Colonic mucosa (tissue), 4 donors: ENCODE measurements at regions of chr20 and their contacts with region 1.

Region 1: GRCh38 chr20:46406199-46406985 is at the start of gene ELMO2:
- DNase-seq: peak; percentile 98
- H3K4me3 ChIP-seq: peak within 1 kb of the TSS; percentile 88
- H3K27ac ChIP-seq: peak within 1 kb of the TSS; percentile 88
- H3K4me1 ChIP-seq: peaks cover 11% of the 10 kb centered on the region
- H3K27me3 ChIP-seq: no peaks in the 10 kb centered on the region
- CTCF ChIP-seq: no peak
- total RNA-seq, gene ELMO2: 20.0 to 24.7 TPM

Region 2: DNA sequence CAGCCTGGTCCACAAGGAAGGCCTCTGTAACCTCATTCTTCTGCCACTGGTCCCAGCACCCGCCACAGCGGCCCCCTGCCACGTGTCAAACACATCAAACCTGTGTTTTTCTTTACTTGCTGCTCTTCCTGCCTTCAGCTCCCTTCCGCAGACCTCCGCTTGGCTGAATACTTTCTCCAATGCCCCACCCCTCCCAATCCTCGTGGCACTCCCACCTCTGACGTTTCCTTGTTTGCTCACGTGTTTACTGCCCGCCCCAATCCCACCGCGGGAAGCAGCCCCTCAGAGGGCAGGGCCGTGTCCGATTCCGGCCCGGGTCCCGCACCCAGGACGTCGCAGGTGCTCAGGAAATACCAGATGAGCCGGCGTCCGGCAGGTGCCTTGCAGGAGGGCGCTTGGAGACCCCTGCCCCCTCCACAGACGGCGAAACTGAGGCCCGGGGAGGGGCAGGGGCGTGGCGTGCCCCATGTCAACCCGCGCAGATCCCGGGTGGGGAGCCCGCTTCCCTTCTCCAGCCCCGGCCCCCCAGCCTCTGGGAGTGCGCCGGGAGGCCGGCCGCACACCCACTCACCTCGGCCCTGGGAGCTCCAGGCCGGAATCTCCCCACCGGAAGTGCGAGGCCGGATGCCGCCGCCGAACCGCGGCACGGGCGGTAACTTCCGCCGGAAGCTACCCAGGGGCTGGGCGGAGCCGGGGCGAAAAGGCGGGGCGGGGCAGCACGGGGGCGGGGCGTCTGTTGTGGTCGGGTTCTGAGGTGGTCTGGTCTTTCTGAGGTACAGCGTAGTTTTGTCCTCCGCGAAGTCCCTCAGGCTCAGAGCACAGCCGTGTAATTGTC is 42.4 kb before region 1 on chr20:
- intact Hi-C with region 1: loop called (anchors 2 kb)
- DNase-seq: peak; percentile 90
- H3K4me3 ChIP-seq: peak overlapping the region; percentile 99
- H3K27ac ChIP-seq: peak overlapping the region; percentile 100
- H3K4me1 ChIP-seq: peaks cover 23% of the 10 kb centered on the region
- H3K27me3 ChIP-seq: no peaks in the 10 kb centered on the region
- CTCF ChIP-seq: no peak

Region 3: DNA sequence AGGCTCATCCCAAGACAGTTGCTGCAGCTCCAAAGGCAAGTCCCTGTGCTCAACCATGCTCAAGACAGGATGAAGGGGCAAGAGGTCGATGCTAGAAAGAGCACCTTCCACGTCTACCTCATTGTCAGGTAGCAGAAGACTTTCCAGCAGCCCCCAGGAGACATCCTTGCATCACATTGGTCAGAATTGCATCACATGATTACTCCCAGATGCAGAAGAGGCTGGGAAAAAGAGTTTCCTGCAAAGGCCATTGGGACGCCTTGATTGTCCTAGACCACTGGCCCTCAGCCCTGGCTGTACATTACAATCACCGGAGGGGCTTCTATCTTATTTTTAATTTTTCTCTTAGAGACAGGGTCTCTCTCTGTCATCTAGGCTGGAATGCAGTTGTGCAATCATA is 124.2 kb after region 1 on chr20:
- intact Hi-C with region 1: no loop called
- DNase-seq: no peak
- H3K4me3 ChIP-seq: no peak overlapping the region
- H3K27ac ChIP-seq: no peak overlapping the region
- H3K4me1 ChIP-seq: no peaks in the 10 kb centered on the region
- H3K27me3 ChIP-seq: no peaks in the 10 kb centered on the region
- CTCF ChIP-seq: no peak